ENCODE measurements at regions of chr1 and their contacts with region 1.

Region 1: GRCh38 chr1:117128323-117129079 is 7.0 kb upstream of the TRIM45 start:
- DNase-seq: no peak
- H3K4me3 ChIP-seq: no peak overlapping the region
- H3K27ac ChIP-seq: no peak overlapping the region
- H3K4me1 ChIP-seq: no peaks in the 10 kb centered on the region
- H3K27me3 ChIP-seq: no peaks in the 10 kb centered on the region
- CTCF ChIP-seq: peak in 1 of 3 donors; percentile 42
- EP300 ChIP-seq: no peak
- POLR2A ChIP-seq: no peak

Region 2: DNA sequence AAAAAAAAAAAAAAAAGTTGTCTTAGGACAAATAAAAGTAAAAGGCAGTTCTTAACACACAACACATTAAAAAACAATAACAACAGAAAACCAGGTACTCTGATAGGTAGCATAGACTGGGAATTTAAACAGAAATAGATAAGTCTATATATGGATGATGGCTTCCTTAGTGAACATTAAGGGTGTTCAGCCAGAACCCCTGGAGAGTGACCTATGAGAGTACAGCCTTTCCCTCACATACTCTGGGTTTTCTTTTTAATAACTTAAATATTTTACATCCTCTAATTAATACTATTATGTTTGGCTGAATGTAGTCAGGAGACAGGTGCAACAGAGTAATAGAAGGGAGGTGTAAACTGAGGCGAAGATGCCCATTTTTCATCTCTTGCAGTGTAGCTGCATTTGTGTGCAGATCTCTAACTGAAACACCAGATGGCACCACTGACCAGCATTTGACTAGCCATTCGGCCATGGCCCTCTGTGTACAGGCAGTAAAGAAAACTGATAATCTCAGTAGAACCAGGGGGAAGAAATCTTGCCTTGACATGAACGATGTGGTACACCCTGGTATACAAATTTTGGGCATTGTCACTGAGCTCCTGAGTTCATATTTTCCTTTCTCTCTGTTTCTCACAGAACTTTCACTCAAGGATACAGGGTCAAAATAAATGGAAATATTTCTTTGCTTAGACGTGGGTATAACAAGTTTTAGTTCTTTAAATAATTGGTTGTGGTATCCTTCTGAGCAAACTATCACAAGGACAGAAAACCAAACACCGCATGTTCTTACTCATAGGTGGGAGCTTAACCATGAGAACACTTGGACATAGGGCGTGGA is 60.7 kb before region 1 on chr1:
- intact Hi-C with region 1: loop called in 2 of 4 experiments (anchors 5 kb)
- DNase-seq: peak; percentile 39 to 55 (median 50)
- H3K4me3 ChIP-seq: no peak overlapping the region
- H3K27ac ChIP-seq: no peak overlapping the region
- H3K4me1 ChIP-seq: no peaks in the 10 kb centered on the region
- H3K27me3 ChIP-seq: no peaks in the 10 kb centered on the region
- CTCF ChIP-seq: peak; percentile 23 to 63 (median 62)
- EP300 ChIP-seq: no peak
- POLR2A ChIP-seq: no peak

Region 3: DNA sequence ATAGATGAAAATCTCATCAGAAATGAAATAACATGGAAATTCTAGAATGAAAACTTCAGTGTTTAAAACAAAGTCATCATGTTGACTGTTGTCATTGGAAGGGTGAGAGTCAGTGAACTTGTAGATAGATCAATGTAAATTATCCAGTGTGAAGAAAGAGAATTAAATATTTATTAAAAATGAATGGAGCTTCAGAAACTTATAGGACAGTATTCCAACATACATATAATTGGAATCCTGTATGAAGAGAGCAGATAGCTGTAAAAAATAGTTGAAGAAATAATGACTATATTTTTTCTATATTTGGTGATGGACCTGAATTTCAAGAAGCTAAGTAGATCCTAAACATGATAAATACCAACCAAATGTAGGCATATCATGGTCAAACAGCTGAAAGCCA is 298.8 kb after region 1 on chr1:
- intact Hi-C with region 1: no loop called
- DNase-seq: no peak
- H3K4me3 ChIP-seq: no peak overlapping the region
- H3K27ac ChIP-seq: no peak overlapping the region
- H3K4me1 ChIP-seq: no peaks in the 10 kb centered on the region
- H3K27me3 ChIP-seq: no peaks in the 10 kb centered on the region
- CTCF ChIP-seq: no peak
- EP300 ChIP-seq: no peak
- POLR2A ChIP-seq: no peak